Psoas muscle (tissue), 8 donors: ENCODE measurements at regions of chr2 and their contacts with region 1.

Region 1: DNA sequence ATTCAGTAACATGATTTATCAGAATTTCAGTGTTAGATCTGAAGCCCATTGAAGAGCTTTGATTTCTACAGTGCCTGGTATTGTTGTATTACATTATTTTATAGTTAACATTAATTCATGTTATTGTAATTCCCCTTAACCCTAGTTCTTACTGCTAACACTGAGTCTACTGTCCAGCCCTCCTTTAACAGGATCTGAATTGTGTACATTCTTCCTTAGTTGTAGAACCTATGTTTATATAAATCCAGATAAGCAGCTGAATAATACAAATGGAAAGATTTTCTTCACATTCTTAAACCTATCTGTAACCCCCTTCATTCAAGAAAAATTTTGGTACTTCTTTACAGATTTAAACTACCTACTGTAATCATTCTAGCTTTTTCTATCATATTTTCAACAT is 14.7 kb downstream of the NDUFAF7 start:
- DNase-seq: no peak
- ATAC-seq: no peak
- H3K4me3 ChIP-seq: no peak overlapping the region
- H3K27ac ChIP-seq: no peak overlapping the region
- H3K4me1 ChIP-seq: no peaks in the 10 kb centered on the region
- H3K27me3 ChIP-seq: no peaks in the 10 kb centered on the region
- CTCF ChIP-seq: no peak

Region 2: DNA sequence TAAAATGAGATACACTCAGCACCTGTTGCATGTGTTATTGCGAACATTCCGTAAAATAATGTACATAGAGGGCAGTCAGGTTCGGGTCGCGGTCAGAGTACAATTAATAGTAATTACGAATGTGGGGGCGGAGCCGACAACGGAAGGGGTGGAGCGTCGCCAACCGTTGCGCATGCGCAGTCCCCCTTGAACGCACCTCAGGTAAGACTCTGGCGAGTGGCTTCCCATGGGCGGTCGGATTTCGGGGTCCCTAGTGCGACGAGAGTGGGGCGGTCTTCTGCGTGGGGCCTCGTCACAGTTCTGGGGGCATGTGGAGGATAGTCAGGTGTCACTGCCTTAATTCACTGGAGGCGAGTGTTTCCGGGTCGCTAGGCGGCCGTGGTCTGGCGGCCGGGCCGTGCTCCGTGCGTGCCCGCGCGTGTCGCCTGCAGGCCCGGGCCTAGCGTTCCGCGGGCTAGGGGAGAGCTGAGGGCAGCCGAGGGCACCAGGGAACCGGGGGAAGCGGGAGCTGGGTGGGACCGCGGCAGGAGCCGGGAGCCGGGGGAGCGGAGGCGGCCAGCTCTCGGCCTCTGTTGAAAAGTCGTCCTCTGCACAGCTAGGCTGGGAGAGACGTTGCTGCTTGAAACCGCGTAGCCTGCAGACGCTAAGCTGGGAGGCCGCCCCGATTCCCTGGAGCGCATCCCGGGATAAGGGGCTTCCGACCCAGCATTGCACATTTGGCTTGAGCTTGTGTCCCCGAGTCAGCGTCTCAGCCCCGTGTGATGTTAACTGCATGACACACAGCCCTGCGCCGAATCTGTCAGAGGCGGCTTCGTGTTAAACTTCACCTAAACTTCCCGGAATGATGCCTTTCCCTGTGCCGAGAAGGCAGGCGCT is 49.6 kb before region 1 on chr2 and contains the start of gene CEBPZOS:
- intact Hi-C with region 1: no loop called
- DNase-seq: peak; percentile 81 to 92
- ATAC-seq: peak; percentile 92 to 95 (median 92)
- H3K4me3 ChIP-seq: peak within 1 kb of the TSS; percentile 99
- H3K27ac ChIP-seq: peak within 1 kb of the TSS; percentile 92
- H3K4me1 ChIP-seq: peaks cover 10% of the 10 kb centered on the region
- H3K27me3 ChIP-seq: no peaks in the 10 kb centered on the region
- CTCF ChIP-seq: no peak
- total RNA-seq, gene CEBPZOS: 47.3 to 78.0 (median 57.5) TPM

Region 3: GRCh38 chr2:37231241-37232130 is 14.7 kb before region 1 on chr2 and contains the starts of genes CEBPZ and NDUFAF7:
- intact Hi-C with region 1: no loop called
- DNase-seq: peak; percentile 92 to 95
- ATAC-seq: peak; percentile 96 to 98 (median 98)
- H3K4me3 ChIP-seq: peak within 1 kb of the TSS; percentile 84
- H3K27ac ChIP-seq: peak within 1 kb of the TSS; percentile 91
- H3K4me1 ChIP-seq: peaks cover 27% of the 10 kb centered on the region
- H3K27me3 ChIP-seq: no peaks in the 10 kb centered on the region
- CTCF ChIP-seq: no peak
- total RNA-seq, gene CEBPZ: 31.7 to 76.6 (median 64.9) TPM
- total RNA-seq, gene NDUFAF7: 20.8 to 31.1 (median 23.3) TPM

Region 4: DNA sequence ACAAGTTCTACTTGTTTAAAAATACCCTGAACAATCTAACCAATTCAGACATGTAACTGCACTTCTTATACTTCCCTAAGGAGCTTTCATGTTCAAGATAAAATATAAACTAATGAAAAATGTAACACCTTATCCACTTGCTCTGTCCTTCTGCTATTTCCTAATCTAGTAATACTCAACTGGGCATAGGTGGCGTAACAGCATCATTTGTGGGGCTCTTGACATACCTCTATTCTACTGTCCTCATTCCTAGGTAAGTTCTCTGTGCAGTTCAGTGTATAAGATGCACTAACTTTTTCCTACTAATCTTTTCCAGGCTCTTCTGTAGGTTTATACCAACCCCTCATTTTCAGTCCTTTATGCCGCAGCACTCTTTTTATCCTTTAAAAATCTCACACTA is 41.8 kb after region 1 on chr2:
- intact Hi-C with region 1: loop called in 1 of 2 experiments (anchors 5 kb)
- DNase-seq: no peak
- ATAC-seq: no peak
- H3K4me3 ChIP-seq: no peak overlapping the region
- H3K27ac ChIP-seq: no peak overlapping the region
- H3K4me1 ChIP-seq: no peaks in the 10 kb centered on the region
- H3K27me3 ChIP-seq: no peaks in the 10 kb centered on the region
- CTCF ChIP-seq: peak; percentile 6